Activated CD4-positive, alpha-beta T cell treated with anti-CD3 and anti-CD28 coated beads for 36 hours (primary cell): ENCODE measurements at regions of chr7 and their contacts with region 1.

Region 1: GRCh38 chr7:32490127-32490822 is at the start of gene LSM5:
- DNase-seq: peak; percentile 95
- ATAC-seq: peak; percentile 70
- H3K4me3 Mint-ChIP-seq: peak within 1 kb of the TSS; percentile 82
- H3K27ac Mint-ChIP-seq: peak within 1 kb of the TSS; percentile 99
- H3K4me1 Mint-ChIP-seq: peaks cover 27% of the 10 kb centered on the region
- H3K27me3 Mint-ChIP-seq: no peaks in the 10 kb centered on the region
- total RNA-seq, gene LSM5: 75.6 to 135 TPM

Region 2: DNA sequence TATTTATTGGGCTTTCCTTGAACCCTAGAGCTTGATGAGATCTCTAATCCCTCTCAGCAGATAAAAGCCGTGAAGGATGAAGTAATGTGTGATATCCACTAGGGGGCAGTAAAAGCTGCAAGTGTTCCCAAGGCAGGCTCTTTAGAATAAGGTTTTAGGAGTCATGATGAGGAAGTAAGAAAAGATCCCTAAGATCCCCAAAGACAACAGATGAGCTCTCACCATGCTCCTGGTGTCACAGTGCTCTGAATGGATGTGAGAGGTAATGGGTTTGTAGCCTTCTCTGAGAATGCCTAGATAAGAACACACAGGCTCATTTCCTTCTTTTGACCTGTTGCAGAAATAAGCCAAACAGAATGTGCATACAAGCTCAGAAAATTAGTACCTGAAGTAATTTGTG is 1046.8 kb before region 1 on chr7:
- CTCF ChIA-PET with region 1: no interaction called
- POLR2A ChIA-PET with region 1: no interaction called
- intact Hi-C with region 1: no loop called
- DNase-seq: no peak
- ATAC-seq: no peak
- H3K4me3 Mint-ChIP-seq: no peak overlapping the region
- H3K27ac Mint-ChIP-seq: no peak overlapping the region
- H3K4me1 Mint-ChIP-seq: no peaks in the 10 kb centered on the region
- H3K27me3 Mint-ChIP-seq: peaks cover 4% of the 10 kb centered on the region

Region 3: GRCh38 chr7:32506266-32507054 is 16.2 kb after region 1 on chr7:
- CTCF ChIA-PET with region 1: interaction called, 6 read pairs
- POLR2A ChIA-PET with region 1: interaction called, 8 read pairs
- intact Hi-C with region 1: loop called in 1 of 2 experiments (anchors 1 kb)
- DNase-seq: peak; percentile 54
- ATAC-seq: peak; percentile 88
- H3K4me3 Mint-ChIP-seq: peak overlapping the region; percentile 17
- H3K27ac Mint-ChIP-seq: peak overlapping the region; percentile 88
- H3K4me1 Mint-ChIP-seq: peaks cover 60% of the 10 kb centered on the region
- H3K27me3 Mint-ChIP-seq: no peaks in the 10 kb centered on the region

Region 4: GRCh38 chr7:32588657-32589056 is 98.4 kb after region 1 on chr7:
- CTCF ChIA-PET with region 1: no interaction called
- POLR2A ChIA-PET with region 1: no interaction called
- intact Hi-C with region 1: loop called in 1 of 2 experiments (anchors 5 kb)
- DNase-seq: peak; percentile 27
- ATAC-seq: peak; percentile 87
- H3K4me3 Mint-ChIP-seq: no peak overlapping the region
- H3K27ac Mint-ChIP-seq: peak overlapping the region; percentile 4
- H3K4me1 Mint-ChIP-seq: peaks cover 18% of the 10 kb centered on the region
- H3K27me3 Mint-ChIP-seq: no peaks in the 10 kb centered on the region

Region 5: GRCh38 chr7:32891800-32892520 is 401.7 kb after region 1 on chr7:
- CTCF ChIA-PET with region 1: no interaction called
- POLR2A ChIA-PET with region 1: no interaction called
- intact Hi-C with region 1: loop called (anchors 1 to 5 kb)
- DNase-seq: peak; percentile 99
- ATAC-seq: peak; percentile 67
- H3K4me3 Mint-ChIP-seq: peak overlapping the region; percentile 94
- H3K27ac Mint-ChIP-seq: peak overlapping the region; percentile 99
- H3K4me1 Mint-ChIP-seq: peaks cover 44% of the 10 kb centered on the region
- H3K27me3 Mint-ChIP-seq: no peaks in the 10 kb centered on the region

Region 6: GRCh38 chr7:33062782-33063443 is 572.6 kb after region 1 on chr7:
- CTCF ChIA-PET with region 1: no interaction called
- POLR2A ChIA-PET with region 1: no interaction called
- intact Hi-C with region 1: loop called (anchors 1 to 5 kb)
- DNase-seq: peak; percentile 95
- ATAC-seq: peak; percentile 96
- H3K4me3 Mint-ChIP-seq: peak overlapping the region; percentile 95
- H3K27ac Mint-ChIP-seq: peak overlapping the region; percentile 93
- H3K4me1 Mint-ChIP-seq: peaks cover 32% of the 10 kb centered on the region
- H3K27me3 Mint-ChIP-seq: no peaks in the 10 kb centered on the region